PC-9 (cell line): ENCODE measurements at regions of chr9 and their contacts with region 1.

Region 1: DNA sequence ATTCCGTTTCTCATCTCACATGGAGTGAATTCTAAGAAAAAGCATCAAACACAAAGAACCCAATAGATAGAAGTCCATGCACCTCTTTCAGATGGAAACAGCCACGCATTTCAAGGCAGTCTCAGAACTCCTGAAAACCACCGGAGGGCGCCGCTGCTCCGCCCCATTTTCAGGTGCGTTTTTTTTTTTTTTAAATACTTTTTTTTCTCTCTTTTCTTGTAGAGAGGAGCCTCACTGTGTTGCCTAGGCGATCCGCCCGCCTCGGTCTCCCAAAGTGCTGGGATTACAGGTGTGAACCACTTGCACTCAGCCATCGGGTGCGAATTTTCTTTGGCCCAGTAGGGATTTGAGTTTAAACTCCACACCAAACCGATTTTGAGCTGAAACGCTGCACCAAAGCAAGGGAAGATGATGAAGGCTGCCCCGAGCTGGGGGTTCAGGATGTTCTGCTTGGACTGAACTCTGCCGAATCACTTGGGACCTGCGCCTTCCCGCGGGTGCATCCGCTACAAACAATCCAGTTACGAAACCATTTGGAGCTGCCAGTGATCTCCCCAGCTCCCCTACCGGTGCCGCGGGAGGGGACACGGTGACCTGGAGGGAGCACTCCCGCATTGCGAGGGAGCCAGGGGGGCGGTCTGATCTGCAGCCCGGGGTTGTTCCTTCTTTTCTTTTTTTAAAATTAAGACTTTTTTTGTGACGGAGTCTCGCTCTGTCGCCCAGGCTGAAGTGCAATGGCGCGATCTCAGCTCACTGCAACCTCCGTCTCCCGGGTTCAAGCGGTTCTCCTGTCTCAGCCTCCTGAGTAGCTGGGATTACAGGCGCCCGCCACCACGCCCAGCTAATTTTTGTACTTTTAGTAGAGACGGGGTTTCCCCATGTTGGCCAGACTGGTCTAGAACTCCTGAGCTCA is 1.4 kb downstream of the PTGR1 start:
- DNase-seq: peak; percentile 66 to 73
- H3K4me3 ChIP-seq: peak overlapping the region; percentile 96
- H3K27ac ChIP-seq: peak overlapping the region; percentile 100
- H3K4me1 ChIP-seq: peaks cover 51% of the 10 kb centered on the region
- H3K27me3 ChIP-seq: no peaks in the 10 kb centered on the region
- CTCF ChIP-seq: peak; percentile 81

Region 2: DNA sequence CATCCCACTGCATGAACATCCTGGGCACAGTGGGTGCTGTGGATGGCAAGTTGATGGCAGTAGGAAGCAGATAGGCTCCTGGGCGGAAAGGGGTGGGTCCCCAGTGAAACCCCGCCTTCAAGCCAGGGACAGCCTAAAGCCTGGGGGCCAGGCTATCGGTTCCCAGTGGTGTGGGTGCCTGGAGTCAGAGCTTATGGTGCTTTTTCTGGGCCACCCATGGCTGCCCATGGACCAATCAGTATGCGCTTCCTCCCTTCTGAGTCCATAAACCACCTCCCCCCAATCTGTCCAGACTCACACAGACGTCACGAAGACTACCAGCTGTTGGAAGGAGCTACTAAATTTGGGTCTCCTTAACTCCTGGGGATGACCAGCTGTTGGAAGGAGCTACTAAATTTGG is 96.4 kb before region 1 on chr9:
- CTCF ChIA-PET with region 1: no interaction called
- POLR2A ChIA-PET with region 1: no interaction called
- intact Hi-C with region 1: no loop called
- DNase-seq: no peak
- H3K4me3 ChIP-seq: no peak overlapping the region
- H3K27ac ChIP-seq: no peak overlapping the region
- H3K4me1 ChIP-seq: no peaks in the 10 kb centered on the region
- H3K27me3 ChIP-seq: no peaks in the 10 kb centered on the region
- CTCF ChIP-seq: no peak

Region 3: DNA sequence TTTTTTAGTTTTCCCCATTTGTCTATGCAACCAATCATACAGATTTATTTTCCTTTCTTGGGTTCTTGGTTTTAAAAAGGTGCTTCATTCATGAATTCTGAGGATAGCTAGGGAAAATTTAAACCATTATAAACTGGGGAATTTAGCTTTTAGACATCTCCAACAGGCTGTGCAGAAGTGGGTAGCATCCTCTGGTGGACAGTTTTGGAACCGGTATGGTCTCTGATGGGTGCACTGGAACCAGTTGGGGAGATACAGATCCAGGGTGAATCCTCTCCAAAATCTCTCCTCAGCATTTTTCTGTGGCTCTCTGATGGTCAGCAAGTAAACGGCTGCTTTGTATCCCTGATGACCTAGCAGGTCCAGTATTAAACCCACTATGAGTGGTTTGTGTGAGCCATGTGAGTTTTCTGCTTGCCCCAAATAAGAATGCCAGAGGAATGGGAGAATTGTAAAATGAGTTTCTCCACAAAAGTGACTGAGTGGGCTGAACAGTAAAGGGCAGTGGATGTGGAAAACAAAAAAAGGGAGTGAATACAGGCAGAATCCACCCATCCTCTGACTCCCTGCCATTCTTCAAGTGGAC is 23.9 kb after region 1 on chr9:
- CTCF ChIA-PET with region 1: interaction called, 6 read pairs
- POLR2A ChIA-PET with region 1: interaction called, 13 read pairs
- intact Hi-C with region 1: loop called (anchors 1 kb)
- DNase-seq: peak in 1 of 2 experiments; percentile 26
- H3K4me3 ChIP-seq: no peak overlapping the region
- H3K27ac ChIP-seq: peak overlapping the region; percentile 73
- H3K4me1 ChIP-seq: peaks cover 32% of the 10 kb centered on the region
- H3K27me3 ChIP-seq: no peaks in the 10 kb centered on the region
- CTCF ChIP-seq: peak; percentile 68

Region 4: DNA sequence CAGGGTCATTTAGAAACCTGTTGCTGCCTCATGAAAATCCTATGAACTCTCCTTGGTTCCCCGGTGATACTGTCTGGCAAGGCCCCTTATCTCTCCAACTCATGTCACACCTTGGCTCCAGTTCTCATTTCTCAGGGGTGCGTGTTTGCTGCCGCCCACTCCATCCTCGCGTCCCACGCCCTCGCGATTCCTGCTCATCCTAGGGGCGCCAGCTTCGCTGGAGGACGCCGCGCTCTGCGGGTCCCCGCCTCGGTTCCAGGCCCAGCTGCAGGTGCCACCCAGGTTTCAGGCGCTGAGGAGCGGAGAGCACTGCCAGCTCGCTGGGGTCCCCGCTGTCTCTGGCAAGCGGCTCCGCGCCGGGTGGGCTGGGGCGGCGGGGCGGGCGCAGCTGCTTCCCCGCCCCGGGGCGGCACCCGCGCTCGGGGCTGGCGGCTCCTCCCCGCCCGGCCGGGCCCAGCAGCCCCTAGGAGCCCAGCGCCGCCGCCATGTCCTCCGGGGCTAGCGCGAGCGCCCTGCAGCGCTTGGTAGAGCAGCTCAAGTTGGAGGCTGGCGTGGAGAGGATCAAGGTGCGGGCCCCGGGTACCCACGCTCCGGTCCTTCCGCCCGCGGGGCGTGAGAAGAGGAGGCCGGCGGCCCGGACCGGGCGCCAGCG is 63.2 kb after region 1 on chr9 and contains the start of gene GNG10:
- CTCF ChIA-PET with region 1: no interaction called
- POLR2A ChIA-PET with region 1: no interaction called
- intact Hi-C with region 1: loop called (anchors 1 kb)
- DNase-seq: peak in 1 of 2 experiments; percentile 69
- H3K4me3 ChIP-seq: peak within 1 kb of the TSS; percentile 73
- H3K27ac ChIP-seq: peak within 1 kb of the TSS; percentile 48
- H3K4me1 ChIP-seq: peaks cover 16% of the 10 kb centered on the region
- H3K27me3 ChIP-seq: no peaks in the 10 kb centered on the region
- CTCF ChIP-seq: no peak
- total RNA-seq, gene GNG10: 70.8 and 76.9 TPM in 2 replicates

Region 5: GRCh38 chr9:111728136-111728535 is 130.1 kb after region 1 on chr9:
- CTCF ChIA-PET with region 1: no interaction called
- POLR2A ChIA-PET with region 1: interaction called, 13 read pairs
- intact Hi-C with region 1: no loop called
- DNase-seq: peak in 1 of 2 experiments; percentile 78
- H3K4me3 ChIP-seq: peak overlapping the region; percentile 22; the same call in 1 of the 2 replicates
- H3K27ac ChIP-seq: peak overlapping the region; percentile 71
- H3K4me1 ChIP-seq: peaks cover 38% of the 10 kb centered on the region
- H3K27me3 ChIP-seq: no peaks in the 10 kb centered on the region
- CTCF ChIP-seq: no peak

Region 6: GRCh38 chr9:111752455-111752854 is 154.4 kb after region 1 on chr9:
- CTCF ChIA-PET with region 1: no interaction called
- POLR2A ChIA-PET with region 1: no interaction called
- intact Hi-C with region 1: no loop called
- DNase-seq: no peak
- H3K4me3 ChIP-seq: no peak overlapping the region
- H3K27ac ChIP-seq: no peak overlapping the region
- H3K4me1 ChIP-seq: no peaks in the 10 kb centered on the region
- H3K27me3 ChIP-seq: no peaks in the 10 kb centered on the region
- CTCF ChIP-seq: no peak

Region 7: DNA sequence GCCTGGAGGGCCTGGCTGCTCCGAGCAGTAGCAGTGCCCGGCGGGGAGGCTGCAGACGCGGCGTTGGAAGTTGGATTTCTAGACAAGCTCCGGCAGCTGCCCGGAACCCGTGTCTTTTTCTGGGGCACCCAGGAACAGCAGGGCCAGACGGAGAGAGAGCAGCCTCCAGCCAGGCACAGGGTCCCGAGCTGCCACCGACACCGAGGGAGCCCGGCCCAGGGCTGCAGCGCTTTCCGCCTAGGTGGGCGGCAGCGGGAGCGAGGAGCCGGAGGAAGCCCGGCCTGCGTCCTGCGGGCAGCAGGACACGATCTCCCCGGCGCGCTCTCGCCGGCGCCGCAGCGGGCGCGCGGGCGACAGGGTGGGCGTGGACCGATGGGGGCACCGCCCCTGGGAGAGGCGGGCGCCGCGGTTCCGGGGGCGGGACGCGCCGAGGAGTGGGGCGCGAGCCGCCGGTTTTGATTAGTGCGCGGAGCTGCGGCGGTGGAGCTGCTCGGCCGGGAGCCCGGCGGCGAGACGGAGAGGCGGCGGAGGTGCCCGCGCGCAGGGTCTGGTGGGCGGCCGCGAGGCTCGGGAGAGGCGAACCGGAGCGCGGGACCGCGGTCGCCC is 298.4 kb after region 1 on chr9 and contains the start of gene UGCG:
- CTCF ChIA-PET with region 1: no interaction called
- POLR2A ChIA-PET with region 1: no interaction called
- intact Hi-C with region 1: loop called (anchors 1 kb)
- DNase-seq: peak; percentile 68 to 96
- H3K4me3 ChIP-seq: peak within 1 kb of the TSS; percentile 76
- H3K27ac ChIP-seq: peak within 1 kb of the TSS; percentile 83
- H3K4me1 ChIP-seq: peaks cover 59% of the 10 kb centered on the region
- H3K27me3 ChIP-seq: no peaks in the 10 kb centered on the region
- CTCF ChIP-seq: no peak
- total RNA-seq, gene UGCG: 79.8 and 88.7 TPM in 2 replicates

Region 8: DNA sequence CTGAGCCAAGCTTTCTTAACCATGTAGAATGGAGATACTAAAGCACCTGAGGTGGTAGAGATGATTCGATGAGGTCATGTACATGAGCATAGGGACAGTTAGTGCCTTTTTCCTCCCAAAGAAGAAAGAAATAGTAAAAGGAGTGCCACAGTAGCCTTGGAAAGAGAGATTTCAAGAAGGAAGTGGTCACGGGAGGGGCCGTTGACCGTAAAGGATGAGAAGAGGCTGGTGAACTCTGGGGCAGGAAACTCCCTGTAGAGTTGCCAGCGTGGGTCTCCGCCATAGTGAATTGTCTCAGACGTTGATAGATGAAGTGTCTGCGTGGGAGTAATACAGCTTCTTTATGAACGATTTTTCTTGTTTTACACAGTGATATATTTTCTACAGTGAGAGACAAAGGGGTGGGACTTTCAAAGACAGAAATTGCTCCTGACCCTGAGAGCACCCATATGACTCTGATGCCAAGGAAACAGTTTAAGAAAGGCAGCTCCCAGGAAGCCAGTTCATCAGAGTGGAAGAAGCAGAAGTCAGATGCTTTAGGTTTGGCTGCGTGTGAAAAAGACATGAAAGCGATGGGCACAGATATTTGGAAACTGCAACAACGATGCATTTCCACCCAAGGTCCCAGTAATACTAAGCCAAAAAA is 339.8 kb after region 1 on chr9:
- CTCF ChIA-PET with region 1: no interaction called
- POLR2A ChIA-PET with region 1: no interaction called
- intact Hi-C with region 1: loop called (anchors 10 kb)
- DNase-seq: no peak
- H3K4me3 ChIP-seq: no peak overlapping the region
- H3K27ac ChIP-seq: no peak overlapping the region
- H3K4me1 ChIP-seq: no peaks in the 10 kb centered on the region
- H3K27me3 ChIP-seq: no peaks in the 10 kb centered on the region
- CTCF ChIP-seq: no peak